ENCODE measurements at regions of chr3 and their contacts with region 1.

Region 1: GRCh38 chr3:36868614-36869436 is 76.0 kb downstream of the TRANK1 start:
- DNase-seq: peak; percentile 46 to 57 (median 48)
- H3K4me3 ChIP-seq: no peak overlapping the region
- H3K4me3 Mint-ChIP-seq: peak overlapping the region in 3 of 8 donors; percentile 4 to 49 (median 31)
- H3K27ac ChIP-seq: no peak overlapping the region
- H3K27ac Mint-ChIP-seq: peak overlapping the region in 4 of 7 donors; percentile 45 to 83 (median 74)
- H3K4me1 ChIP-seq: peaks cover 10% of the 10 kb centered on the region
- H3K4me1 Mint-ChIP-seq: peaks cover 21 to 44% (median 35%) of the 10 kb centered on the region in 4 donors
- H3K27me3 ChIP-seq: no peaks in the 10 kb centered on the region
- H3K27me3 Mint-ChIP-seq: no peaks in the 10 kb centered on the region

Region 2: GRCh38 chr3:35965908-35966307 is 902.9 kb before region 1 on chr3:
- CTCF ChIA-PET with region 1: no interaction called
- POLR2A ChIA-PET with region 1: no interaction called
- intact Hi-C with region 1: loop called (anchors 5 kb)
- DNase-seq: no peak
- H3K4me3 ChIP-seq: no peak overlapping the region
- H3K4me3 Mint-ChIP-seq: no peak overlapping the region
- H3K27ac ChIP-seq: no peak overlapping the region
- H3K27ac Mint-ChIP-seq: no peak overlapping the region
- H3K4me1 ChIP-seq: no peaks in the 10 kb centered on the region
- H3K4me1 Mint-ChIP-seq: peaks cover 0 to 3% (median 3%) of the 10 kb centered on the region in 4 donors
- H3K27me3 ChIP-seq: no peaks in the 10 kb centered on the region
- H3K27me3 Mint-ChIP-seq: no peaks in the 10 kb centered on the region

Region 3: DNA sequence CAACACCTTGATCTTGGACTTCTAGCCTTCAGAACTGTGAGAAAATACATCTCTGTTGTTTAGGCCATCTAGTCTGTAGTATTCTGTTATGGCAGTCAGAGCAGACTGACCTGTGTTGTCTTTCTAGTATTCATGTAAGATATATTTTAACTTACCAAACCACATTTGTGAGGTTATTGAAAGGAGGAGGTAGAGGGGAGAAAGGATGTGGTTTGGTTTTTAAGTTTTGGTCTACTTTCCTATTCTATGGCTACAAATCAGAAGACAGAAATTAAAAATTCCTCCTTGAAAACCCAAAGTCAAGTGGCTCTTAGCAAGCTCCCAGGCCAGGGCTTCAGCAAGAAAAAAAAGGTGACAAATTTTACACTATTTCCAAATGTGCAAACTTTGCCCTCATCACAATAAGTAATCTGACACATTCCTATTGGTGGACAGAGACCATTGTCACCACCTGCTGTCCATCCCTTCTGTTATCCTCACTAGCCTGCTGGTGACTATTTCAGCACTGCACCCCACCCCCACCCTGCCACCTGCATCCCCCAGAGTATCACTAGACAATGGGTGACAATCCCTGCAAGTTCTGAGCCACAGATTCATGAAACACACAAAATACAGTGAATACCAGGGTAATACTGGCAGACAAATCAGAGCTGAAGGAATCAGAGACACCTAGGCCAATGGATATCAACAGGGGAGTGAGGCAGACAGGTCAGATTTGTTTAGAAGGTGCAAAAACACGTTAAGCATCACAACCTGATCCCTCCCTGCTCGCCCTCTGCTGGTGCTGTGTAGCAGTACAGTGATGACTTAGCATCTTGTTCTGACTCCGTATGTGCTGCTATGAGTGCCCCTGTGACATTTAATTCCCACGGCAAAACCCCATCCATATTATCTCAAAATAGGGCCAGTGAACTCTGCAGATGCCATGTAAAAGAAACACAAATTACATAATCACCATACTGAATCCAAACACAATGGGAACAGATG is 25.5 kb before region 1 on chr3:
- CTCF ChIA-PET with region 1: interaction called, 25 read pairs
- POLR2A ChIA-PET with region 1: no interaction called
- intact Hi-C with region 1: no loop called
- DNase-seq: peak; percentile 25 to 49 (median 39)
- H3K4me3 ChIP-seq: no peak overlapping the region
- H3K4me3 Mint-ChIP-seq: peak overlapping the region in 7 of 8 donors; percentile 18 to 79 (median 61)
- H3K27ac ChIP-seq: no peak overlapping the region
- H3K27ac Mint-ChIP-seq: peak overlapping the region; percentile 12 to 84 (median 69)
- H3K4me1 ChIP-seq: peaks cover 24% of the 10 kb centered on the region
- H3K4me1 Mint-ChIP-seq: peaks cover 25 to 42% (median 34%) of the 10 kb centered on the region in 4 donors
- H3K27me3 ChIP-seq: no peaks in the 10 kb centered on the region
- H3K27me3 Mint-ChIP-seq: no peaks in the 10 kb centered on the region

Region 4: DNA sequence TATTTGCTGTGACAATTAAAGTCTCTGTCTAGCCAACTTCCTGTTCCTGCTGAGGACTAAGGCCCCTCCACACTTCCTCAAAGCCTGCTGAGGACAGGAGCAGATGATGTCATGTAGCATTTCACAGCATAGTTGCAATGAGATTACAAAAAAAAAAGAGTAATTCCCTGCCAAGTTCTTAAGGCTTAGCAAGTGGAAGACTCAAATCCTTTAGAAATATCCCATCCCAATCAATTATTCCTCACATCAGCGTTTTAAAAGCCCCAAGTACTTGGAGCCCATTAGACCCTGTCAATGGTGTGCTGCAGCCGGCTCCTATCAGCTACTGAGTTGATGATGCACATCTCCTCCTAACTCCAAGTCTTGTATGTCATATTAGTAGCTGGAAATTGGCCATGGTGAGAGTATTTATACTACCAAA is 24.3 kb after region 1 on chr3:
- CTCF ChIA-PET with region 1: interaction called, 10 read pairs
- POLR2A ChIA-PET with region 1: no interaction called
- intact Hi-C with region 1: no loop called
- DNase-seq: peak; percentile 40 to 85 (median 56)
- H3K4me3 ChIP-seq: no peak overlapping the region
- H3K4me3 Mint-ChIP-seq: peak overlapping the region in 4 of 8 donors; percentile 1 to 65 (median 56)
- H3K27ac ChIP-seq: peak overlapping the region; percentile 43
- H3K27ac Mint-ChIP-seq: peak overlapping the region; percentile 79 to 97 (median 93)
- H3K4me1 ChIP-seq: peaks cover 46% of the 10 kb centered on the region
- H3K4me1 Mint-ChIP-seq: peaks cover 40 to 74% (median 55%) of the 10 kb centered on the region in 4 donors
- H3K27me3 ChIP-seq: no peaks in the 10 kb centered on the region
- H3K27me3 Mint-ChIP-seq: no peaks in the 10 kb centered on the region

Region 5: DNA sequence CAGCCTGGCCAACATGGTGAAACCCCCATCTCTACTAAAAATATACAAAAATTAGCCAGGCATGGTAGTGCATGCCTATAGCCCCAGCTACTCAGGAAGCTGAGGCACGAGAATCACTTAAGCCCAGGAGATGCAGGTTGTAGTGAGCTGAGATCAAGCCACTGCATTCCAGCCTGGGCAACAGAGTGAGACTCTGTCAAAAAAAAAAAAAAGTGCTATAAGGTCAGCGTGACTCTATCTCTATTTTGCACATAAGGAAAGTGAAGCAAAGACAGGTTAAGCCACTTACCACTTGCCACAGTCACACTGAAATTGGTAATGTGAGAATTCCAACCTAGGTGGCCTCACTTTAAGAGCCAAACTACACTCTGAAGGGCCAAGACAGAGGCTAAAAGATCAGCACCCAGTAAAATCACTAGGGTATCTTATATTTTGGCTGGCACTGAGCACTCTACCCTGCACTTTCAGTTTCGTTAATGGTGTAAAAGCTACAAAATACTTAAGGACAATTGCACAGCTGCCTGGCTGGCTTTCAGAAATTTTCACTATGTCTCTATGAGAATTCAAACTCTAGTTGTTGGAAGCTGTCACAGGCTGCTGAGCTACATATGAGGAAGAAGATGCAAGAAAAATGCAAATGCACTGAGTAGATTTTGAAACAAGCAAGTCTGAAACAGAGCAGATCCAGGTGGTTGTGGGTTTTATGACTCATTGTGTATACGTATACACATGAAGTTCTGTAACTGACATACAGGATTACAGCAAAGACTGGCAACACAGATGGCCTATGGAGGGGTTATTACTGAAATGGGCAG is 43.4 kb after region 1 on chr3:
- CTCF ChIA-PET with region 1: interaction called, 7 read pairs
- POLR2A ChIA-PET with region 1: interaction called, 4 read pairs
- intact Hi-C with region 1: loop called (anchors 2 kb)
- DNase-seq: peak; percentile 54 to 84 (median 65)
- H3K4me3 ChIP-seq: peak overlapping the region; percentile 18 to 41
- H3K4me3 Mint-ChIP-seq: peak overlapping the region; percentile 61 to 84 (median 79)
- H3K27ac ChIP-seq: peak overlapping the region; percentile 72
- H3K27ac Mint-ChIP-seq: peak overlapping the region; percentile 66 to 95 (median 84)
- H3K4me1 ChIP-seq: peaks cover 38% of the 10 kb centered on the region
- H3K4me1 Mint-ChIP-seq: peaks cover 24 to 43% (median 33%) of the 10 kb centered on the region in 4 donors
- H3K27me3 ChIP-seq: no peaks in the 10 kb centered on the region
- H3K27me3 Mint-ChIP-seq: no peaks in the 10 kb centered on the region

Region 6: DNA sequence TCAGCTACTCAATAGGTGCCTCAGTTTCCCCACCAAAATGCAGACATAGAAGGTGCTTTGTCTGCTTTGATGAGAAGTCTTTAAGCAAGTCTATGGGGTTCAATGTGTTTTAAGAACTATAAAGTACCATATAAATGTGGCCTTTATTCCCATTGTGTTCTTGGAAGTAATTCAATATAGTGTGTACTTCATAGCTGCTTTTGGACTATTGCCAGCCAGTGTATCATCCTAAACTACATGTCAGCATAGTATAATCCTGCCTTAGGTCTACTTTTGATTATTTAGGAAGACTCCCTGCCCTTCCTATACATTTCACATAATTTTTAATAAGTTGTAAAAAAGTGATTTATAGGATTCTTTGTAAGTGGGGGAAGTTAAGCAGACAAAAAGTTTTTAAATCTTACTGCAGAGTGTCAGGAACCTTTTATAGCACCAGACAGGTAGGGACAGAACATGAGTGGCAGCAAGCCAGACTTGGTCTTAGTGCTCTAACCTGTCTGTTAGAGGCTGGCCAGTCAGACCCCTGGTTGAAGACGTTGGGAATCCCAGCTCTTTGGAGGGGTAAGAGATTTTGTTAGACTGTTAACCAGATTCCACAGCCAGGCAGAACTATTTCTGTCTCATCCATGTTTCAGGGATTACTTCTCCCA is 172.8 kb after region 1 on chr3:
- CTCF ChIA-PET with region 1: no interaction called
- POLR2A ChIA-PET with region 1: no interaction called
- intact Hi-C with region 1: no loop called
- DNase-seq: no peak
- H3K4me3 ChIP-seq: no peak overlapping the region
- H3K4me3 Mint-ChIP-seq: no peak overlapping the region
- H3K27ac ChIP-seq: no peak overlapping the region
- H3K27ac Mint-ChIP-seq: no peak overlapping the region
- H3K4me1 ChIP-seq: no peaks in the 10 kb centered on the region
- H3K4me1 Mint-ChIP-seq: peaks cover 0 to 10% (median 0%) of the 10 kb centered on the region in 4 donors
- H3K27me3 ChIP-seq: no peaks in the 10 kb centered on the region
- H3K27me3 Mint-ChIP-seq: no peaks in the 10 kb centered on the region

Region 7: GRCh38 chr3:37694284-37694675 is 825.5 kb after region 1 on chr3:
- CTCF ChIA-PET with region 1: no interaction called
- POLR2A ChIA-PET with region 1: no interaction called
- intact Hi-C with region 1: no loop called
- DNase-seq: no peak
- H3K4me3 ChIP-seq: no peak overlapping the region
- H3K4me3 Mint-ChIP-seq: no peak overlapping the region
- H3K27ac ChIP-seq: no peak overlapping the region
- H3K27ac Mint-ChIP-seq: no peak overlapping the region
- H3K4me1 ChIP-seq: no peaks in the 10 kb centered on the region
- H3K4me1 Mint-ChIP-seq: no peaks in the 10 kb centered on the region
- H3K27me3 ChIP-seq: no peaks in the 10 kb centered on the region
- H3K27me3 Mint-ChIP-seq: peaks cover 2% of the 10 kb centered on the region in 2 donors

Measured in CD4-positive, alpha-beta memory T cell (primary cell).